ENCODE measurements at regions of chr19 and their contacts with region 1.

Region 1: DNA sequence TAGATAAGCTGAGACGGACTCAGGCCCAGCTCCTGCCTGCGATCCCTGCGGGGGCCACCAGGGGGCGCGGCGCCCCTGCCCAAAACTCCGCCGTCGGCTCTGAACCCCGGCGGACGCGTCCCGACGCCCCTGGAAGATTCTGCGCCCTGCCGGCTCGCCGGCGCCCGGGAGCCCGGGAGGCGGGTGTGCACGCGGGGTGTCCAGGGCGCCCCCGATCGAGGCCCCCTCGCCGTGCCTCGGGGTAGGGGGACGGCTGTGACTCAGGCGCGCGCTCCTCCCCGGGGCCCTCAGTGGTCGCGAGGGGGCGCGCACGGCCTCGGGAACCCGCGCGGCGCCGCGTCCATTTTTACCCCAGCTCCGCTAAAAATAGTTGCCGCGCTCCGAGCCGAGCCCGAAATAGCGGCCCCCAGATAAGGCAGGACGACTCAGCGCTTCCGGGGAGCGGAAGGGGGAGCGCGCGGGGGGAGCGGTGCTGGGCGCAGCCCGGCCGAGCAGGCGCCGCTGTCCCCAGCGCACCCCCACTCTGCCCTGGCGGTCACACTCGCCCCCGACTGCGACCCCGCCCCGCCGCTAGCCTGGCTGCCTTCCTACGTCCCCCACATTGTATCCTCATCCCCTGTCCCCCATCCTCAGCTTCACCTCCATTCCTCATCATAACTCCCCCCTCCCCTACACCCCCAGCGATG is 16.0 kb upstream of the ERCC1 start:
- H3K4me3 ChIP-seq: peak overlapping the region; percentile 54
- H3K27ac ChIP-seq: peak overlapping the region; percentile 40; the same call in 1 of the 2 replicates
- H3K4me1 ChIP-seq: 0 out of 2 replicates have a peak, but pooled peaks cover 4% of the 10 kb centered on the region
- CTCF ChIP-seq: peak; percentile 67

Region 2: GRCh38 chr19:45405435-45406225 is 34.1 kb before region 1 on chr19:
- CTCF ChIA-PET with region 1: interaction called, 32 read pairs
- POLR2A ChIA-PET with region 1: interaction called, 6 read pairs
- H3K4me3 ChIP-seq: peak overlapping the region; percentile 82
- H3K27ac ChIP-seq: peak overlapping the region; percentile 96
- H3K4me1 ChIP-seq: 0 out of 2 replicates have a peak, but pooled peaks cover 7% of the 10 kb centered on the region
- CTCF ChIP-seq: no peak

Region 3: GRCh38 chr19:45455707-45456499 is 16.2 kb after region 1 on chr19:
- CTCF ChIA-PET with region 1: interaction called, 13 read pairs
- POLR2A ChIA-PET with region 1: interaction called, 3 read pairs
- H3K4me3 ChIP-seq: peak overlapping the region; percentile 23
- H3K27ac ChIP-seq: 0 out of 2 replicates have a peak overlapping the region, but pooled peaks have one; percentile 11
- H3K4me1 ChIP-seq: peaks cover 7% of the 10 kb centered on the region; the same call in 1 of the 2 replicates
- CTCF ChIP-seq: no peak

Region 4: DNA sequence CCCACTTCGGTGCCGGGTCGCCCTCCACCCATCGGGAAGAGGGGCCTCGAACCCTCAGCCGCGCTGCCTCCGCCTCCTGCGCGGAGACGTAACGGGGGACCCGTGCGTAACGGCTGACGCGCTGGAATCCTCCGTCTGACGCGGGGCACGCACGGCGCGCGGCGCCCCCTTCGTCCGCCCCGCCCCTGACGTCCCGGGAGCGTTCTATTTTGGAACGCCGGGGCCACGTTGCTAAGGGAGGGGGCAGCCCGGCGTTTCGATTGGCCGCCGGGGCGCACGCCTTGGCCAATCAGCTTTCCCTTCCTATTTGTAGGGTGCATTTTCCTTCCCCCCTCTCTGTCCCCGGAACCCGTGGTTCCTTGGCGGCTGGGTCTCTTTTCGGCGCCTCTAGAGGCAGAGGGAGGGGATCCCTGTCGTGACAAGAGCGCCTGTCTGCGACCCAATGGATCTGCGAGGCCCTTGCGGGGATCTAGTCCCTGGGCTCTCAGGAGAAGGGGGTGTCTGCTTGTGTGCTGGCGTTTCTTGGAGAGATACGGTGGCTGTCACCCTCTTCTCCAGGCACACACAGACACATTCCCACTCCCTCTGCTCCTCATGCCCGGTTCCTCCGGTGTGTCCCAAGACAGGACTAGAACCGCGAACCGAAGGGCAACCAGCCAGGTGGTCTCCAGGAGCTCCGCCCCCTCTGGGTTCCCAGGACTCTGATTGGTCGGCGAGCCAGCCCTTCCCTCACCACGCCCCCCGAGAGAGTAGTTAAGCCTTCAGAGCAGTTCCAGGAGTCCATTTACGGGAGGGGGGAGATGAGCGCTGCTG is 29.6 kb after region 1 on chr19:
- CTCF ChIA-PET with region 1: interaction called, 295 read pairs
- POLR2A ChIA-PET with region 1: interaction called, 10 read pairs
- H3K4me3 ChIP-seq: peak overlapping the region; percentile 65
- H3K27ac ChIP-seq: peak overlapping the region; percentile 45
- H3K4me1 ChIP-seq: peaks cover 5% of the 10 kb centered on the region; the same call in 1 of the 2 replicates
- CTCF ChIP-seq: peak; percentile 6; the same call in 1 of the 2 replicates

Region 5: GRCh38 chr19:45496349-45496953 is 56.7 kb after region 1 on chr19:
- CTCF ChIA-PET with region 1: interaction called, 13 read pairs
- POLR2A ChIA-PET with region 1: no interaction called
- H3K4me3 ChIP-seq: peak overlapping the region; percentile 53
- H3K27ac ChIP-seq: no peak overlapping the region
- H3K4me1 ChIP-seq: peaks cover 6% of the 10 kb centered on the region
- CTCF ChIP-seq: no peak

Region 6: DNA sequence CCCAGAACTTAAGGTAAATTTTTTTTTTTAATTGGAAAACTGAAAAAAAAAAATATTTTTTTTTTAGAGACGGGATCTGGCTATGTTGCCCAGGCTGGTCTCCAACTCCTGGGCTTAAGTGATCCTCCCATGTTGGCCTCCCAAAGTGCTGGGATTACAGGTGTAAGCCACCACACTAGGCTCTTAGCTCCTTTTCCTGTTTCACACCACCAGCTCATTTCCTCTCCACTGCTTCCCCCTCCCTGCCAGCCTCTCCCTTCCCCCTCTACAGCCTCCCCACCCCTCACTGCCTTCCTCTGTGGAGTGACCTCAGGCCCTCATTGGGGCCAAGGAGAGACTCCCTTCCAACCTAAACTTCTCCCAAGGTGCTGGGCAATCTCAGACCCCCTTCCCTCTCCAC is 224.1 kb after region 1 on chr19:
- CTCF ChIA-PET with region 1: no interaction called
- POLR2A ChIA-PET with region 1: no interaction called
- H3K4me3 ChIP-seq: no peak overlapping the region
- H3K27ac ChIP-seq: no peak overlapping the region
- H3K4me1 ChIP-seq: peaks cover 8% of the 10 kb centered on the region
- CTCF ChIP-seq: no peak

Measured in HEK293 (cell line).